Activated CD4-positive, alpha-beta memory T cell treated with anti-CD3 and anti-CD28 coated beads for 36 hours (primary cell): ENCODE measurements at regions of chr6 and their contacts with region 1.

Region 1: GRCh38 chr6:145214570-145214969 is 520.8 kb downstream of the EPM2A start:
- DNase-seq: no peak
- H3K4me3 Mint-ChIP-seq: no peak overlapping the region
- H3K27ac Mint-ChIP-seq: no peak overlapping the region
- H3K4me1 Mint-ChIP-seq: peaks cover 8% of the 10 kb centered on the region
- H3K27me3 Mint-ChIP-seq: peaks cover 4% of the 10 kb centered on the region

Region 2: DNA sequence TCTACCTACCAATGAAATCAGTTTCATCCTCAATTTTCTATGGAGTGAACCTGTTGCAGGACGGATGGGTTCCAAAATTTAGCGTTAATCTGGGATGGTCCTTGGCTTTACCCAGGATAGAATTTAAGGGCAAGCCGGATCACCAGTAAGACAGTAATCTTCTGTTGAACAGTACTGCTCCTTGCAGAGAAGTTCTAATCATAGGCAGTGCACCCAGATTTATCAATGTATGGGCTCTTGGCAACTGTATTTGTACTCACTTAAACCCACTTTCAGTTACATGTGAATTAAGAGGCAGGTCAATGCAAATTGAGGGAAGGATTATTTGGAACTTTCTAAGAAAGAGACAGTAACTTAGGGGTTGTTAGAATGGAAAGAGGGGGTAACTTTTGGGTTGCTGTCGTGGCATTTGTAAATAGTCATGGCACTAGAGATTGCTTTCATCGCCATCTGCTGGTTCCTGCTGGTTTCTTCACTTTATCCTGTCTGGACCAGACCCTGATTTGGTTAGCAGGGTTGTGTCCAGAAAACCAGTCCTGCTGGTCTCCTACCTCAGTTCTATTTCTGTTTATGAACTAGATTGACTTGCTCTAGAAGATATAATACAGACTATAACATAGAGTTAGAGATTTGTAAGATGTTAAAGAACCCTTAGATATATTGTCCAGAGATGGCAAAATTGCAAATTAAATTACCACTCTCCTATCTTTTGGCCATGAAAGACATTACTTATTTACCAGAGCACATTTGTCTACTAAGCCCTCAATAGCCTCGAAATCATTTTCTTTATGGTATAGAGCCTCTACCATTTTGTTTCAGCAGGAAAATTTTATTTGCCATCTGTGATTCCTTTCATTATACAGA is 283.2 kb before region 1 on chr6:
- CTCF ChIA-PET with region 1: no interaction called
- POLR2A ChIA-PET with region 1: no interaction called
- intact Hi-C with region 1: loop called (anchors 10 kb)
- DNase-seq: peak; percentile 48
- H3K4me3 Mint-ChIP-seq: no peak overlapping the region
- H3K27ac Mint-ChIP-seq: no peak overlapping the region
- H3K4me1 Mint-ChIP-seq: no peaks in the 10 kb centered on the region
- H3K27me3 Mint-ChIP-seq: no peaks in the 10 kb centered on the region

Region 3: DNA sequence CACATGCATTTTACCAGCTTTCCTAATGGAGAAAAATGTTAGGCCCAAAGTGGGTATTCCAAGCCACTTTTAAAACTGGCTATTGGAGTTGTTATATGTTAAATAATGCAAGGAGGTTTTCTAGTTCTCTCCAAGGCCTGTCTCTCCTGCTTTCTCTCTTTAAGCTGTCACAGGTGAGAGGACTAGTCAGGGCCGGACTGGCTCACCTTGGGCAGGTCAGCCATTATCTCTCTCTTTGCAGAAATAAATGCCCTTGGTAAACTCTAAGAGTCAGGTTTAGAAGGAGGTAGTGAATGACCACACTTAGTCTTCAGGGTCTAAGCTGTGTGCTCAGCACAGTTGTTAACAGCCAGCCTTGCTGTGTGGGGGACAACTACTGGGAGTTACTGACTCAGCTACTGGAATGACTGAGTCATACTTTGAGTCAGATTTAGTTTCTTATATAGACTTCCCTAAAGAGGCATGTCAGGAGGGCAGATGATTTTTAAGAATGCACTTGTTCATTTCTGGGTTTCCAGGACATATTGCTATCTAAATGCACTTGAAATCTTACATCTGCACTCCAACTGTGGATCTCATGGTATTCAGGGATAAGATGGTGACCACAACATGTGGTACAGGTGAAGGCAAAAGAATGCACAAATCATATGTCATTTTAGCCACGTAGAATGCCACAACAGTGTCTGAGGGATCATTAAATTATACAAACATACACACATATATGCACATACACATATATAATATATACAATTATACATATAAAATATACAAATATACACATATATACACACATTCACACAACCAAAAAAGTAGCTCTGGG is 198.6 kb before region 1 on chr6:
- CTCF ChIA-PET with region 1: no interaction called
- POLR2A ChIA-PET with region 1: no interaction called
- intact Hi-C with region 1: loop called (anchors 10 kb)
- DNase-seq: peak; percentile 53
- H3K4me3 Mint-ChIP-seq: no peak overlapping the region
- H3K27ac Mint-ChIP-seq: no peak overlapping the region
- H3K4me1 Mint-ChIP-seq: peaks cover 11% of the 10 kb centered on the region
- H3K27me3 Mint-ChIP-seq: peaks cover 4% of the 10 kb centered on the region

Region 4: DNA sequence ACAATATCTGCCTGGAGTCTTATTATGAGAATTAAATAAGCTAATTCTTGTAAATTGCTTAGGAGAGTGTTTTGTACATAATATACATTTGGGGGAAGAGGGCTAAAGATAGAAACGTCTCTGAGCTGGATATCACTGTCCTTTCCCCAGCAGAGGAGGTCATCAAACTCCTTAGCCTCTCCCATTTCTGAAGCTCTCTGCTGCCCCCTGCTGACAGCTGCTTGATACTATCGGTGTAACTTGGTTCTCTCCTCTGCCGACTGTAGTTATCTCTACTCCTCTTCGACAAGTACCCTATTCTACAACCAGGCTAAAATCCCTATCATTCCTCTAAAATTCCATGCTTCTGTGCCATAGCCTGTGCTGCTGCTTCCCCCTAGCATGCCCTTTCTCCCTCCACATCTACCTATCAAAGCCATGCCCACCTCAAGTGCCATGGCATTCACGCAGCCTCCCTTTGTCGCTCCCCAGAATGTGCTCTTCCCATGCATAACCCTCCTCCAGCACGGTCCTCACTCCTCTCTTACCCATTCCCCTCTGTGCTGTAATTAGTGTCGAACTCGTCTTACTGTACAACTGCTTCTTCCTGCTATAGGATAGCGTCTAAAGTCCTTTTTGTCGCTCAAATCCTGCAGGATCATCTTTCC is 419.5 kb after region 1 on chr6:
- CTCF ChIA-PET with region 1: no interaction called
- POLR2A ChIA-PET with region 1: no interaction called
- intact Hi-C with region 1: loop called (anchors 10 kb)
- DNase-seq: peak; percentile 84
- H3K4me3 Mint-ChIP-seq: no peak overlapping the region
- H3K27ac Mint-ChIP-seq: no peak overlapping the region
- H3K4me1 Mint-ChIP-seq: peaks cover 5% of the 10 kb centered on the region
- H3K27me3 Mint-ChIP-seq: no peaks in the 10 kb centered on the region